ENCODE measurements at regions of chr12 and their contacts with region 1.

Region 1: DNA sequence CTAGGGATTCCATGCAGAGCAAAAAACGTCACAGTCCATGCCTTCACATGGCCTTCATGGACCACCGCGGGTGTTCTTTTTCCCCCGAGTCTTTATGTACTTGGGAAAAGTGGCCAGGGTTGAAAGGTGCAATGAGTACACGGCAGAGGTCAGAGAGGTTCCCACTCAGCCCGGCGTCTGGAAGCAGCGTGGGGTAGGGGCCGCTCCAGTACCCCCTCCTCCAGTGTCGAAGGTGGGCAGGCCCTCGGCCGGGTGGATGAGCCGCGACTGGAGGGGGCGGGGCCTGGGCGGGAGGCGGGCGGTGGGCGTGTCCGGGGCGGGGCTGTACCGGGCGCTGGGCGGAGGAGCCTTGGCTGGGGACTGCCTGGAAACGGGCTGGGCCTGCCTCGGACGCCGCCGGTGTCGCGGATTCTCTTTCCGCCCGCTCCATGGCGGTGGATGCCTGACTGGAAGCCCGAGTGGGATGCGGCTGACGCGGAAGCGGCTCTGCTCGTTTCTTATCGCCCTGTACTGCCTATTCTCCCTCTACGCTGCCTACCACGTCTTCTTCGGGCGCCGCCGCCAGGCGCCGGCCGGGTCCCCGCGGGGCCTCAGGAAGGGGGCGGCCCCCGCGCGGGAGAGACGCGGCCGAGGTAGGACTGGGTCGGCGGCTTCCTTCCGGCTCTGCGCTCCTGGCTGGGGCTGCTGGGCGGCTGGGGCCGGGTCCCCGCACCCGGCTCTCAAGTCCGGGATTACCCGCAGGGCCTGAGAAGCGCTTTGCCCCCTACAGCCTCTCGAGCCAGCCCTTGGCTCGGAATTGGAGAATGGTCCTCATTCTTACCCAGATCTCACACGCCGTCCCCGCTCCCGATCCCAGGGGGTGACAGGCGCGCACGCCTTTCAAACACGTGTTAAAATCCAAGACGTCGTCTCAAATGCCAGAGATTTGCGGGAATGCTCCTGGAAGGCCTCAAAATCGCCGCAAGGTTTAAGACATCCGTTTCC is at the start of gene RXYLT1:
- DNase-seq: peak; percentile 66 to 93 (median 83)
- ATAC-seq: peak; percentile 93
- H3K4me3 ChIP-seq: peak within 1 kb of the TSS; percentile 76 to 79
- H3K4me3 Mint-ChIP-seq: peak within 1 kb of the TSS; percentile 96
- H3K27ac ChIP-seq: peak within 1 kb of the TSS; percentile 74 to 87
- H3K27ac Mint-ChIP-seq: peak within 1 kb of the TSS; percentile 96
- H3K4me1 ChIP-seq: peaks cover 8% of the 10 kb centered on the region
- H3K4me1 Mint-ChIP-seq: peaks cover 32% of the 10 kb centered on the region
- H3K27me3 ChIP-seq: no peaks in the 10 kb centered on the region
- H3K27me3 Mint-ChIP-seq: no peaks in the 10 kb centered on the region
- CTCF ChIP-seq: no peak
- total RNA-seq, gene RXYLT1: 5.5 to 5.8 TPM

Region 2: DNA sequence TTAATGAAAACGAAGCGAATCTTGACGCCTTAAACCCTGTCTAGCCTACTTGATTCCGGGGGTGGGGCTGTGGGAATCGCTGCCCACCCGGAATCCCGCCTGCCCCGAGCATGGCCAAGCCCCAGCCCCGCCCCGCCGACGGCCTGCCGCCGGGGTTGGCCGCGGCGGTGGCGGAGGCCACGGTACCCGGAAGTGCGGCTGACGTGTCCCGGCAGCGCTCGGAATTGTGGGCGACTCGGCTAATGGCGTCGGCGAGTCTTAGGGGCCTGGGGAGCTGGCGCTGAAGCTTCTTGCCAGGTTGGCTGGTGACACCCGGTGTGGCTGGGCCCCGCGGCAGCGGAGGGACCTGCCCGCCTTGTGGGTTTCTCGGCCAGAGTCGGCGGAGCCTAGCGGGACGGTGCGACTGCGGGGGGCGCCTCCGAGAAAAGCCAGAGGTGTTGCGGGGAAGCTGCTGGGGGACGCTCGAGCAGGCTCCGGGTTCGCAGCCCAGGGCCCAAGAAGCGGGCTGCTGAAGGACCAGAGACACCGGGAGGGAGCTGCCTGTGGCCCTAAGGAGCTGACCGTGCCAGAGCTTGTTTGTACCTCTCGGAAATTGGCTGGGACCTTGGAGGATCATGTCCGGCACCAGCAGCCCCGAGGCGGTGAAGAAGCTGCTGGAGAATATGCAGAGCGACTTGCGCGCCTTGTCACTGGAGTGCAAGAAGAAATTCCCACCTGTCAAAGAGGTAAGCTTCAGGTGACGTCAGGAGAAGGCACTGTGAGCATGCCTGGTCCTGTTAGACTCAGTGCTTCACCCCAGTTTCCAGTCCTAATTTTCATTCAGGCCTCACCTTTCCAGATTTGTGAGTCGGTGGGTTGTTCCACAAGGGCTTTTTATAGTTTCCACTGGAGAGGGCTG is 1312.9 kb before region 1 on chr12 and contains the start of gene MON2:
- CTCF ChIA-PET with region 1: no interaction called
- POLR2A ChIA-PET with region 1: no interaction called
- intact Hi-C with region 1: loop called in 1 of 2 experiments (anchors 10 kb)
- DNase-seq: peak; percentile 71 to 94 (median 86)
- ATAC-seq: peak; percentile 92
- H3K4me3 ChIP-seq: peak within 1 kb of the TSS; percentile 96 to 98
- H3K4me3 Mint-ChIP-seq: peak within 1 kb of the TSS; percentile 92
- H3K27ac ChIP-seq: peak within 1 kb of the TSS; percentile 85 to 96
- H3K27ac Mint-ChIP-seq: peak within 1 kb of the TSS; percentile 93
- H3K4me1 ChIP-seq: peaks cover 31% of the 10 kb centered on the region
- H3K4me1 Mint-ChIP-seq: peaks cover 29% of the 10 kb centered on the region
- H3K27me3 ChIP-seq: peaks cover 0 to 2% of the 10 kb centered on the region in 2 experiments
- H3K27me3 Mint-ChIP-seq: no peaks in the 10 kb centered on the region
- CTCF ChIP-seq: no peak
- total RNA-seq, gene MON2: 44.2 to 48.9 TPM

Region 3: DNA sequence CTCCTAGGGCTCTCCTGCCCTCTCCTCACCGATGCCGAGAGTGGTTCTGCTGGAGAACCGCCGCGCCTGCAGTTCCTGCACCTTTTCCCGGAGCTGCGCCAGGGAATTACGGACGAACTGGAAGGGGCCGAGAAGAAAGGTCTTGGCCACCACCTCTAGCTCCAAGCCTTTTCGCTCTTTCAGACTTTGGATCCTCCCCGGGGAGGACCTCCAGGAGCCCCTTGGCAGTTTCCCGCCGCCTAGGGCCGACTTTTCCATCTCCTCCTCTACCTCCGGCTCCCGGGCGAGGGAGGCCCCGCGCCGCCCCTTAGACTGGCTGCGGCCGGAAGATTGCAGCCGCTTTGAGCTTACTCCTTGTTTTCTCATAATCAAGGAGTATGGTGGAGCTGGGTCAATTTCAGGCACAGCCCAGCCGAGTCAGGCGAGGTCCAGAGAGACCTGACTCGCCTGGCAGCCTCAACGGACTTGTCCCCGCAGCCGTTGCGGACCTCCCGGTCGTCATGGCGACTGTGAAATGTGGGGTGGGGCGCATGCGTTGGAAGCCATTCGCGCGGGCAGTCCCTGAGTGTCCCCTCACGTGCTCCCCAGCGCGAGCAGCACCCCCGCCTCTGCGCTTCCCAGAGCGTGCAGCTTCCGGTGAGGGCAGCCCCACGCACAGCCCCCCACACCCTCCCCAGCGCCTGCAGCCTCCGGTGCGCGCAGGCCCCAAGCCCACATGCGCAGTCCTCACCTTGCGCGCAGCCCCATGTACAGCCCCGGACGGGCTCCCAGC is 111.6 kb before region 1 on chr12 and contains the start of gene DPY19L2:
- CTCF ChIA-PET with region 1: no interaction called
- POLR2A ChIA-PET with region 1: interaction called, 3 read pairs
- intact Hi-C with region 1: loop called in 1 of 2 experiments (anchors 1 kb)
- DNase-seq: peak; percentile 21 to 88 (median 56)
- ATAC-seq: peak; percentile 90
- H3K4me3 ChIP-seq: peak within 1 kb of the TSS; percentile 68 to 73
- H3K4me3 Mint-ChIP-seq: peak within 1 kb of the TSS; percentile 95
- H3K27ac ChIP-seq: peak within 1 kb of the TSS; percentile 51 to 83
- H3K27ac Mint-ChIP-seq: peak within 1 kb of the TSS; percentile 72
- H3K4me1 ChIP-seq: peaks cover 7% of the 10 kb centered on the region
- H3K4me1 Mint-ChIP-seq: peaks cover 36% of the 10 kb centered on the region
- H3K27me3 ChIP-seq: no peaks in the 10 kb centered on the region
- H3K27me3 Mint-ChIP-seq: no peaks in the 10 kb centered on the region
- CTCF ChIP-seq: no peak
- total RNA-seq, gene DPY19L2: 3.4 to 3.6 TPM

Region 4: DNA sequence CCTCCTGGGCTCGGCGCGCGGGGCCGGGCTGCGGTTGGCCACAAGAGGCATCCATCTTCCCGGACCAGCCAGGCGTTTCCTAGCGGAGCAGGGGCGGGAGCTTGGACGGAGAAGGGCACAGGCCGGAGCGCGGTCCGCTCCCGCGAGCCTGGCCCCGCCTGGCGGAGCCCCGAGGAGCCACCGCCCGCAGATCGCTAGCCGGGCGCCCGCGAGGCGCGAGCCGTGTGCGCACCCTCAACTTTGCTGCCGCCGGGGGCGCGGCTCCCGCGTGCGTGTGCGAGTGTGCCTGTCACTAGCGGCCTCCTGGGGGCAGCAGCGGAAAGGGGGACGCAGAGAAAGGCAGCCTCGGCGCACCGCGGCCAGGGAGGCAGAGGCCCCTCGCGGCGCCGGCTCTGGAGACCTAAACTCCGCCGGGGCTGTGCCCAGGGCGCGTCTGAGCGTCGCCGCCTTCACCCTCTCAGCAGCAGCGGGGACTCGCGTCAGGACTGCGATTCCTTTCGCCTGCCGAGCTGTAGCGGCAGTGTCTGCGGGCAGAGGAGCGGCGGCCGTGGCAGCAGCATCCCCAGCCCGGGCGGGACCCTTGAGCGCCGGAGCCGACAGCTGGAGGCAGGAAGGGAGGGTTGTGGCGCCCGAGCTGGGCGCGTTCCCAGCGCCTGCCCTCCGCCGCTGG is 64.1 kb after region 1 on chr12:
- CTCF ChIA-PET with region 1: interaction called, 4 read pairs
- POLR2A ChIA-PET with region 1: no interaction called
- intact Hi-C with region 1: loop called in 1 of 2 experiments (anchors 1 kb)
- DNase-seq: peak; percentile 61 to 91 (median 78)
- ATAC-seq: peak; percentile 94
- H3K4me3 ChIP-seq: peak overlapping the region; percentile 49 to 69
- H3K4me3 Mint-ChIP-seq: peak overlapping the region; percentile 76
- H3K27ac ChIP-seq: no peak overlapping the region
- H3K27ac Mint-ChIP-seq: no peak overlapping the region
- H3K4me1 ChIP-seq: peaks cover 7% of the 10 kb centered on the region
- H3K4me1 Mint-ChIP-seq: peaks cover 10% of the 10 kb centered on the region
- H3K27me3 ChIP-seq: peaks cover 0 to 13% of the 10 kb centered on the region in 2 experiments
- H3K27me3 Mint-ChIP-seq: peaks cover 32% of the 10 kb centered on the region
- CTCF ChIP-seq: peak; percentile 78